Naive thymus-derived CD4-positive, alpha-beta T cell (primary cell): ENCODE measurements at regions of chr3 and their contacts with region 1.

Region 1: DNA sequence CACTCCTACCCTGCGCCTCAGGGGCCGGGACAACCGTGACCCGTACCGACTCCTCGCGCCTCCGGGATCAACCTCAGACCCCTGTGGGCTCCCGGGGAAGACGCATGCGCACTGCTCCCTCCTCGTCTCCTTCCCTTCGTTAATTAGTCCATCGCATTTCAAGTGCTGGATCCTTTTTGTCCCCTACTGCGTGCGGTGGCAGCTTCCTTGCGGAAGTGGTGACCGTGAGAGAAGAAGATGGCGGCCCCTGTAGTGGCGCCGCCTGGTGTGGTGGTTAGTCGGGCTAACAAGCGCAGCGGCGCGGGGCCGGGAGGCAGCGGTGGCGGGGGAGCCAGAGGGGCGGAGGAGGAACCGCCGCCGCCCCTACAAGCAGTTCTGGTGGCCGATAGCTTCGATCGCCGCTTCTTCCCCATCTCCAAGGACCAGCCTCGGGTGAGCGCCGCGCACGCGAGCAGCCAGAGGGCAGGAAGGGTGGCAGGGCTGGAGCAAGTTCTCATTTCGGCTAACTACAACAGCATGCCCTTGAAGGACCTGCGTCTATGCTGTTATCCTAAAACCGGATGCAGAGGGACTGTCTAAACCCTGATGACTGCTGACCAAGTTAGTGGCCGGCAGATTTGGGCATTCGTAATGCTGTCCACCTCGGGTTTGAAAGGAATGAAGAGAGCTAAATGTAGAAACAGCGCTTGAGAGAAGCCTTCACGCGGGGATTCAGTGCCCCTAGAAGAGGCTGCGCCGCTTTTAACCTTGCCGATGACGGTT is at the start of gene EIF2B5:
- DNase-seq: peak; percentile 63 to 87 (median 84)
- ATAC-seq: peak; percentile 96
- H3K4me3 ChIP-seq: peak within 1 kb of the TSS; percentile 83
- H3K4me3 Mint-ChIP-seq: peak within 1 kb of the TSS; percentile 96 to 100 (median 98)
- H3K27ac ChIP-seq: peak within 1 kb of the TSS; percentile 86
- H3K27ac Mint-ChIP-seq: peak within 1 kb of the TSS; percentile 92 to 98 (median 97)
- H3K4me1 ChIP-seq: peaks cover 4 to 10% of the 10 kb centered on the region in 2 donors
- H3K4me1 Mint-ChIP-seq: peaks cover 29 to 40% (median 38%) of the 10 kb centered on the region in 7 donors
- H3K27me3 ChIP-seq: no peaks in the 10 kb centered on the region
- H3K27me3 Mint-ChIP-seq: peaks cover 0 to 10% (median 0%) of the 10 kb centered on the region in 5 donors
- total RNA-seq, gene EIF2B5: 47.2 to 87.2 (median 67.7) TPM

Region 2: GRCh38 chr3:183099026-183099837 is 1036.1 kb before region 1 on chr3 and contains the start of gene MCCC1:
- CTCF ChIA-PET with region 1: no interaction called
- POLR2A ChIA-PET with region 1: no interaction called
- intact Hi-C with region 1: loop called in 1 of 2 experiments (anchors 1 kb)
- DNase-seq: peak; percentile 82 to 98 (median 97)
- ATAC-seq: peak; percentile 99
- H3K4me3 ChIP-seq: peak within 1 kb of the TSS; percentile 73
- H3K4me3 Mint-ChIP-seq: peak within 1 kb of the TSS; percentile 87 to 98 (median 97)
- H3K27ac ChIP-seq: peak within 1 kb of the TSS; percentile 83
- H3K27ac Mint-ChIP-seq: peak within 1 kb of the TSS; percentile 90 to 99 (median 97)
- H3K4me1 ChIP-seq: peaks cover 7 to 10% of the 10 kb centered on the region in 2 donors
- H3K4me1 Mint-ChIP-seq: peaks cover 18 to 52% (median 43%) of the 10 kb centered on the region in 7 donors
- H3K27me3 ChIP-seq: no peaks in the 10 kb centered on the region
- H3K27me3 Mint-ChIP-seq: no peaks in the 10 kb centered on the region
- total RNA-seq, gene MCCC1: 17.7 to 37.5 (median 31.8) TPM

Region 3: DNA sequence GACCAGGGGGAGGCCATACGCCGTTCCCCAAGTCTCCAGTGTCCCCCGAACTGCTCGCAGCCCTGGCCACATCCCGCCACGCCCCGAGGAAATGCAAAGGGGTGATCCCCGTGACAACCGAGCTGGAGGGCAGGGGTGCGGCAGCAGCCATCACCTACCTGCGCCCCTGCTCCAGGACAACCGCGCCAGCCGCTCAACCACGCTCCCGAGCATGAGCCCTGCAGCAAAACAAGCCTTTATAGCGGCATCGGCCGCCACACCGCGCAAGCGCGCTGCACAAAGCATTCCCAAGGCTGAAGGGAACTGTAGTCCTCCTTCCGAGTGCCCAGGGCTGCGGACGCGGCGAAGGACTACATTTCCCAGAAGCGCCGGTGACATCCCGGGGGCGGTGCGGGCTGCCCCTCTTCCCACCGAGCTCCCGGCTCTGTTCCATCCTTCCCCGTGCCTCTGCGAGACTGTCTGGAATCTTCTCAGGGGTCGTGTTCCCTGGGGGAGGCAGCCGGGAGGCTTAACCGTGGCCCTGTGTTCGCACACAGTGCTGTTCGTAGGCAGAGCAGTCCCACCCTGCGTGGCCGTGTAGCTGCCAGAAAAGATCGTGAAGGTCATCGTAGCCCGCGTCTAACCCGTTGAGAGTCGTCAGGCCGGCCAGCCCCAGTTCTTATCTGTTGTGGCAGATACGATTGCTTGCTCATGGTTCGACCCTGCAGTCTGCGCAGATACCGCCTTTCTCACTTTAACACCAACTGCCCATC is 117.5 kb before region 1 on chr3 and contains the start of gene ABCC5:
- CTCF ChIA-PET with region 1: interaction called, 4 read pairs
- POLR2A ChIA-PET with region 1: interaction called, 5 read pairs
- intact Hi-C with region 1: loop called (anchors 1 kb)
- DNase-seq: peak; percentile 62 to 84 (median 79)
- ATAC-seq: peak; percentile 96
- H3K4me3 ChIP-seq: peak within 1 kb of the TSS; percentile 100
- H3K4me3 Mint-ChIP-seq: peak within 1 kb of the TSS; percentile 96 to 100 (median 99)
- H3K27ac ChIP-seq: peak within 1 kb of the TSS; percentile 72
- H3K27ac Mint-ChIP-seq: peak within 1 kb of the TSS; percentile 70 to 95 (median 91)
- H3K4me1 ChIP-seq: peaks cover 8 to 14% of the 10 kb centered on the region in 2 donors
- H3K4me1 Mint-ChIP-seq: peaks cover 11 to 33% (median 25%) of the 10 kb centered on the region in 7 donors
- H3K27me3 ChIP-seq: no peaks in the 10 kb centered on the region
- H3K27me3 Mint-ChIP-seq: peaks cover 5 to 15% (median 9%) of the 10 kb centered on the region in 5 donors
- total RNA-seq, gene ABCC5: 15.6 to 50.4 (median 25.5) TPM

Region 4: DNA sequence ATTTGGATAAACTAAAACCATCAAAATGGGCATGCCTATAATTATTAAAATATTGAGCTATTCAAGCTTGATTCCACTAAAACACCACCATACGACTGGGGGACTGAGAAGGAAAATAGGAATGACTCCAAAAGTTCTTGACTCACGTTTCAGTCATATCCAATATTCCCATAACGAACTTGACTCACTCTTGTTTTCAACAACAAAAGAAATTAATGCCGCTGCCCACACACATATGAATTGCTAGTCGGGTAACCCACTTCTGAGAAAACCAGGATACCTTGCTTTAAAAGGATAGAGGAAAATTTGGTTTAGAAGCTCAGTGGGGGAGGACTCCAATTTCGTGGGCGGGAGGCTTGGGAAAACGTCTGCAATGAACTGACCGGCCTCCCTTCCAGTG is 77.3 kb before region 1 on chr3:
- CTCF ChIA-PET with region 1: no interaction called
- POLR2A ChIA-PET with region 1: no interaction called
- intact Hi-C with region 1: no loop called
- DNase-seq: no peak
- ATAC-seq: no peak
- H3K4me3 ChIP-seq: no peak overlapping the region
- H3K4me3 Mint-ChIP-seq: no peak overlapping the region
- H3K27ac ChIP-seq: no peak overlapping the region
- H3K27ac Mint-ChIP-seq: no peak overlapping the region
- H3K4me1 ChIP-seq: no peaks in the 10 kb centered on the region
- H3K4me1 Mint-ChIP-seq: peaks cover 0 to 2% (median 0%) of the 10 kb centered on the region in 7 donors
- H3K27me3 ChIP-seq: no peaks in the 10 kb centered on the region
- H3K27me3 Mint-ChIP-seq: peaks cover 0 to 13% (median 0%) of the 10 kb centered on the region in 5 donors

Region 5: GRCh38 chr3:184174646-184175492 is 39.5 kb after region 1 on chr3 and contains the start of gene AP2M1:
- CTCF ChIA-PET with region 1: interaction called, 5 read pairs
- POLR2A ChIA-PET with region 1: interaction called, 7 read pairs
- intact Hi-C with region 1: loop called (anchors 1 kb)
- DNase-seq: peak; percentile 98 to 99 (median 98)
- ATAC-seq: peak; percentile 98
- H3K4me3 ChIP-seq: peak within 1 kb of the TSS; percentile 82
- H3K4me3 Mint-ChIP-seq: peak within 1 kb of the TSS; percentile 89 to 98 (median 96)
- H3K27ac ChIP-seq: peak within 1 kb of the TSS; percentile 95
- H3K27ac Mint-ChIP-seq: peak within 1 kb of the TSS; percentile 75 to 94 (median 90)
- H3K4me1 ChIP-seq: peaks cover 18 to 20% of the 10 kb centered on the region in 2 donors
- H3K4me1 Mint-ChIP-seq: peaks cover 14 to 46% (median 38%) of the 10 kb centered on the region in 7 donors
- H3K27me3 ChIP-seq: no peaks in the 10 kb centered on the region
- H3K27me3 Mint-ChIP-seq: no peaks in the 10 kb centered on the region
- total RNA-seq, gene AP2M1: 111 to 217 (median 185) TPM

Region 6: DNA sequence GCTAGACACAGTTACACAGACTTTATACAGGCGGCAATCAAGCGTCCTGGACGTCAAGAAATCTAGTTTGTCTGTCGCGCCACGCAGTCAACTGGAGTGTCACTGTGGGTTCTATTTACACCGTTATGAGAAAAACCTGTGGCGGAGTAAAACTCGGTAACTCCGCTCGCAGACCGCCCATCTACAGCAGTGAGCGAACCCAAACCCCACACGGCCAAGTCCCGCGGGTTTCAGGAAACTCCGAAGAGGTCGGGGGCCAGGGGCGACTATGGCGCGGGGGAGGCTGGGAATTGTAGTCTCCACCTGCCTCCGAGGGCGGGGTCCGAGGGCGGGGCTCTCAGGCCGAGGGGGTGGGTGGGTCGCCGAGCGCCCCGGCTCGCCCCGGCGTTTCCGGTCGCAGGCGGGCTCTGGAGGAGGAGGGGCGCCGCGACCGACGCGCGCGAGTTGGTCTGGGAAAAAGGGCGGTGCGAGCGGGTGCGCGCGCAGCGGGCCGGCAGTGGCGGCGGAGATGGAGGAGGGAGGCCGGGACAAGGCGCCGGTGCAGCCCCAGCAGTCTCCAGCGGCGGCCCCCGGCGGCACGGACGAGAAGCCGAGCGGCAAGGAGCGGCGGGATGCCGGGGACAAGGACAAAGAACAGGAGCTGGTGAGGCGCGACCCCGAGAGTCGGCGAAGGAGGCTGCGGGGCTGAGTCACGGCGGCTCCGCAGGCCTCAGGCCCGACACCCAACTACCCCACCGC is 163.6 kb after region 1 on chr3 and contains the start of gene PSMD2:
- CTCF ChIA-PET with region 1: no interaction called
- POLR2A ChIA-PET with region 1: interaction called, 3 read pairs
- intact Hi-C with region 1: loop called (anchors 1 kb)
- DNase-seq: peak; percentile 93 to 97 (median 96)
- ATAC-seq: peak; percentile 98
- H3K4me3 ChIP-seq: peak within 1 kb of the TSS; percentile 74
- H3K4me3 Mint-ChIP-seq: peak within 1 kb of the TSS; percentile 89 to 97 (median 94)
- H3K27ac ChIP-seq: peak within 1 kb of the TSS; percentile 80
- H3K27ac Mint-ChIP-seq: peak within 1 kb of the TSS; percentile 85 to 97 (median 92)
- H3K4me1 ChIP-seq: peaks cover 12 to 15% of the 10 kb centered on the region in 2 donors
- H3K4me1 Mint-ChIP-seq: peaks cover 15 to 37% (median 25%) of the 10 kb centered on the region in 7 donors
- H3K27me3 ChIP-seq: no peaks in the 10 kb centered on the region
- H3K27me3 Mint-ChIP-seq: peaks cover 0 to 8% (median 0%) of the 10 kb centered on the region in 5 donors
- total RNA-seq, gene PSMD2: 139 to 204 (median 149) TPM

Region 7: GRCh38 chr3:184371570-184372018 is 236.3 kb after region 1 on chr3:
- CTCF ChIA-PET with region 1: no interaction called
- POLR2A ChIA-PET with region 1: no interaction called
- intact Hi-C with region 1: no loop called
- DNase-seq: peak; percentile 42 to 70 (median 59)
- ATAC-seq: peak; percentile 96
- H3K4me3 ChIP-seq: no peak overlapping the region
- H3K4me3 Mint-ChIP-seq: no peak overlapping the region
- H3K27ac ChIP-seq: no peak overlapping the region
- H3K27ac Mint-ChIP-seq: peak overlapping the region in 8 of 9 donors; percentile 4 to 65 (median 26)
- H3K4me1 ChIP-seq: no peaks in the 10 kb centered on the region
- H3K4me1 Mint-ChIP-seq: peaks cover 5 to 18% (median 10%) of the 10 kb centered on the region in 7 donors
- H3K27me3 ChIP-seq: no peaks in the 10 kb centered on the region
- H3K27me3 Mint-ChIP-seq: peaks cover 4 to 27% (median 8%) of the 10 kb centered on the region in 5 donors

Region 8: GRCh38 chr3:184491867-184492615 is 356.7 kb after region 1 on chr3:
- CTCF ChIA-PET with region 1: no interaction called
- POLR2A ChIA-PET with region 1: no interaction called
- intact Hi-C with region 1: no loop called
- DNase-seq: peak in 1 of 9 donors; percentile 36
- ATAC-seq: peak; percentile 76
- H3K4me3 ChIP-seq: no peak overlapping the region
- H3K4me3 Mint-ChIP-seq: peak overlapping the region in 9 of 10 donors; percentile 15 to 77 (median 55)
- H3K27ac ChIP-seq: no peak overlapping the region
- H3K27ac Mint-ChIP-seq: peak overlapping the region in 1 of 9 donors; percentile 5
- H3K4me1 ChIP-seq: no peaks in the 10 kb centered on the region
- H3K4me1 Mint-ChIP-seq: peaks cover 5 to 18% (median 6%) of the 10 kb centered on the region in 7 donors
- H3K27me3 ChIP-seq: peaks cover 0 to 5% of the 10 kb centered on the region in 2 donors
- H3K27me3 Mint-ChIP-seq: peaks cover 43 to 63% (median 55%) of the 10 kb centered on the region in 5 donors

Region 9: GRCh38 chr3:184523825-184524615 is 388.7 kb after region 1 on chr3:
- CTCF ChIA-PET with region 1: no interaction called
- POLR2A ChIA-PET with region 1: no interaction called
- intact Hi-C with region 1: loop called (anchors 10 kb)
- DNase-seq: no peak
- ATAC-seq: peak; percentile 75
- H3K4me3 ChIP-seq: no peak overlapping the region
- H3K4me3 Mint-ChIP-seq: peak overlapping the region in 7 of 10 donors; percentile 31 to 92 (median 55)
- H3K27ac ChIP-seq: no peak overlapping the region
- H3K27ac Mint-ChIP-seq: peak overlapping the region in 2 of 9 donors; percentile 32 to 51
- H3K4me1 ChIP-seq: peaks cover 0 to 5% of the 10 kb centered on the region in 2 donors
- H3K4me1 Mint-ChIP-seq: peaks cover 0 to 22% (median 15%) of the 10 kb centered on the region in 7 donors
- H3K27me3 ChIP-seq: peaks cover 0 to 8% of the 10 kb centered on the region in 2 donors
- H3K27me3 Mint-ChIP-seq: peaks cover 2 to 57% (median 23%) of the 10 kb centered on the region in 5 donors